ENCODE measurements at regions of chr4 and their contacts with region 1.

Region 1: GRCh38 chr4:82739316-82740179 is 59.0 kb downstream of the SCD5 start:
- DNase-seq: peak; percentile 64 to 89 (median 87)
- ATAC-seq: peak; percentile 99
- H3K4me3 ChIP-seq: no peak overlapping the region
- H3K4me1 ChIP-seq: no peaks in the 10 kb centered on the region
- CTCF ChIP-seq: peak; percentile 93

Region 2: GRCh38 chr4:82462415-82462831 is 277.1 kb before region 1 on chr4:
- intact Hi-C with region 1: loop called in 1 of 2 experiments (anchors 5 kb)
- DNase-seq: peak; percentile 77 to 97 (median 89)
- ATAC-seq: peak; percentile 97
- H3K4me3 ChIP-seq: no peak overlapping the region
- H3K4me1 ChIP-seq: no peaks in the 10 kb centered on the region
- CTCF ChIP-seq: peak; percentile 76

Region 3: GRCh38 chr4:83297548-83298260 is 558.2 kb after region 1 on chr4:
- intact Hi-C with region 1: no loop called
- DNase-seq: no peak
- ATAC-seq: no peak
- H3K4me3 ChIP-seq: no peak overlapping the region
- H3K4me1 ChIP-seq: no peaks in the 10 kb centered on the region
- CTCF ChIP-seq: no peak